Activated CD4-positive, alpha-beta T cell treated with anti-CD3 and anti-CD28 coated beads for 36 hours (primary cell): ENCODE measurements at regions of chr5 and their contacts with region 1.

Region 1: GRCh38 chr5:66285343-66285922 is 141.3 kb downstream of the SREK1 start:
- DNase-seq: peak; percentile 35
- ATAC-seq: peak; percentile 74
- H3K4me3 Mint-ChIP-seq: no peak overlapping the region
- H3K27ac Mint-ChIP-seq: no peak overlapping the region
- H3K4me1 Mint-ChIP-seq: peaks cover 2% of the 10 kb centered on the region
- H3K27me3 Mint-ChIP-seq: peaks cover 5% of the 10 kb centered on the region

Region 2: GRCh38 chr5:66223636-66224035 is 61.8 kb before region 1 on chr5:
- CTCF ChIA-PET with region 1: no interaction called
- POLR2A ChIA-PET with region 1: no interaction called
- intact Hi-C with region 1: loop called in 1 of 2 experiments (anchors 10 kb)
- DNase-seq: peak; percentile 20
- ATAC-seq: no peak
- H3K4me3 Mint-ChIP-seq: no peak overlapping the region
- H3K27ac Mint-ChIP-seq: no peak overlapping the region
- H3K4me1 Mint-ChIP-seq: no peaks in the 10 kb centered on the region
- H3K27me3 Mint-ChIP-seq: no peaks in the 10 kb centered on the region

Region 3: DNA sequence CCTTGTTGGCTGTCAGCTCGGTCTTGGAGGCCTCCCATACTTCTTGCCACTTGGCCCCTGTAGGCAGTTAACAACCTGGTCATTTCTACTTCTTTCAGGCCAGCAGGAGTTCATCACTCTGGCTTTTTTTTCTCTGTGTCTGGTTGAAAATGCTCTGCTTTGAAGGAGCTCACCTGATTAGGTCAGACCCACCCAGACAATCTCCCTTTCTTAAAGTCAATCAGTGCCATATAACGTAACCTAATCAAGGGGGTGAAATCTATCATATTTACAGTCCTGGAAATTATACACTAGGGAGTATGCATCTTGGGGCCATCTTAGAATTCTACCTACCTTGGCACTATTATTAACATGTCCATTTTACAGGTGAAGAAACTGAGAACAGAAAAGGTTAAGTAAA is 14.0 kb after region 1 on chr5:
- CTCF ChIA-PET with region 1: no interaction called
- POLR2A ChIA-PET with region 1: no interaction called
- intact Hi-C with region 1: no loop called
- DNase-seq: no peak
- ATAC-seq: no peak
- H3K4me3 Mint-ChIP-seq: no peak overlapping the region
- H3K27ac Mint-ChIP-seq: no peak overlapping the region
- H3K4me1 Mint-ChIP-seq: no peaks in the 10 kb centered on the region
- H3K27me3 Mint-ChIP-seq: peaks cover 4% of the 10 kb centered on the region

Region 4: DNA sequence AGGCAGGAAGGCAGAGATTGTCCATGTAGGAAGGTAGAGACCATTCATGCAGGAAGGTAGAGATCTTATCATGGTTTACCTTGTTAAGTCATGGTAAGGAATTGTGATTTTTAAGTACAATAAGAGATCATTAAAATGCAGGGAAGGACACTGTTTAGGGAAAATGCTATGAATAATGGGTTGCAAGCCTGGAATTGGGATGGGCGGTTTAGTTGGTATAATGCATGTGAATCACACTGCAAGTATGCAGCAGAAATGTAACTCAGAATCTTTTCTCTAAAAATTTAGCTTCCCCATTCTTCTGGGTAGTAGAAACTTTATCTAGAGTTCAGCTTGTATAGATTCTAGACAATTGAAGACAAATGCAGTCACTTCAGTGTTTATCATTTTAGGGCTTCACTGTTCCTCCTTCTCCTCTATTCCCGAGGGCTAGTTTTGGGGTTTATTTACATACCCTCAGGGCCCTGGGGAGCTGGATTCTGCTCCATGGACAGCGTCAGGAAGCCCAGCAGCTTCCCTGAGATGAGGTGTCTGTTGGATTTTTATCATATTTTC is 70.7 kb after region 1 on chr5:
- CTCF ChIA-PET with region 1: no interaction called
- POLR2A ChIA-PET with region 1: no interaction called
- intact Hi-C with region 1: no loop called
- DNase-seq: no peak
- ATAC-seq: no peak
- H3K4me3 Mint-ChIP-seq: no peak overlapping the region
- H3K27ac Mint-ChIP-seq: no peak overlapping the region
- H3K4me1 Mint-ChIP-seq: no peaks in the 10 kb centered on the region
- H3K27me3 Mint-ChIP-seq: peaks cover 14% of the 10 kb centered on the region